Naive thymus-derived CD8-positive, alpha-beta T cell (primary cell): ENCODE measurements at regions of chr1 and their contacts with region 1.

Region 1: DNA sequence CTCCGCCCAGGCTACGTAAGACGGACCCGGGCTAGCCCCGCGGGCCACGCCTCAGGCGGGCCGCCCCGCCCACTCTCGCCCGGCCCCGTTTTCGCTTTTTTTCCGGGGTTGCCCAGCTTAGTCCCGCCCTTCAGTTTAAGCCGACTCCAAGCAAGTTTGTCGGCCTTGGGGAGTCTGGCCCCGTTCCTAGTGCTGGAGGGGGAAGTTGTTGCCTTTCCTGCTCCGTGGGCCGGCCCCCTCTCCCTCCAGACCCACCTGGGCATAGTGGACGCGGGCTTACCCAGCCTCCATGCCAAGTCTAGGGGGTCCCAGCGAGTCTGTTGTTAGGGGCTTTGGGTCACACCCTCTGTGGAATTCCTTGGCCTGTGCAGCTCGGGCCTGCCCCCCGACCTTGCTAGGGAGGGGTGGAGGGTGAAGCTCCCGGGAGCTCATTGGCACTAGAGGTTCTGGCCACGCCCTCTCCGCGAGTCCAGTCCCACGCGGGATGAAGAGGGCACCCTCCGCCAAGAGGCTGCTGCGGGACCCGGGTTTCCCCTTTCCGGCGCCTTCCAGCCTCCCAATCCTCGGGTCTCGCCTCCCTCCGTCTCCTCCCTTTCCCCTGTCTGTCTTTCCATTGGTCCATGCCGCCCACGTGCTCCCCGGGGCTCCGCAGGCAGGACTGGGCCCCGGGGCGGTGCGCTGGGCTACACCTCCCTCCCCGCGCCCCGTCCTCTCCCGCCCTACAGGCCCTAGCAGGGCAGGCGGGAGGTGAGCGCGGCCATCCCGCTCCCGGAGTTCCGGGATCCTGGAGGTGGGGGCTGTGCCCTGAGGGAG is 3.3 kb downstream of the RUSC1 start:
- DNase-seq: peak; percentile 72 to 91 (median 84)
- ATAC-seq: peak; percentile 81 to 83
- H3K4me3 Mint-ChIP-seq: peak overlapping the region; percentile 82 to 93 (median 90)
- H3K27ac Mint-ChIP-seq: peak overlapping the region; percentile 72 to 94 (median 82)
- H3K4me1 Mint-ChIP-seq: peaks cover 19 to 41% (median 35%) of the 10 kb centered on the region in 4 donors
- H3K27me3 Mint-ChIP-seq: no peaks in the 10 kb centered on the region

Region 2: GRCh38 chr1:155250633-155251449 is 73.2 kb before region 1 on chr1:
- POLR2A ChIA-PET with region 1: interaction called, 37 read pairs
- DNase-seq: peak; percentile 90 to 99 (median 96)
- ATAC-seq: peak; percentile 93 to 99
- H3K4me3 Mint-ChIP-seq: peak overlapping the region; percentile 60 to 82 (median 72)
- H3K27ac Mint-ChIP-seq: peak overlapping the region in 9 of 10 donors; percentile 31 to 84 (median 69)
- H3K4me1 Mint-ChIP-seq: peaks cover 14 to 33% (median 29%) of the 10 kb centered on the region in 4 donors
- H3K27me3 Mint-ChIP-seq: no peaks in the 10 kb centered on the region

Region 3: GRCh38 chr1:155261852-155262673 is 61.9 kb before region 1 on chr1 and contains the start of gene SCAMP3:
- POLR2A ChIA-PET with region 1: interaction called, 13 read pairs
- DNase-seq: peak; percentile 65 to 93 (median 82)
- ATAC-seq: peak; percentile 97 to 98
- H3K4me3 Mint-ChIP-seq: peak within 1 kb of the TSS; percentile 94 to 99 (median 98)
- H3K27ac Mint-ChIP-seq: peak within 1 kb of the TSS; percentile 94 to 99 (median 97)
- H3K4me1 Mint-ChIP-seq: peaks cover 21 to 41% (median 29%) of the 10 kb centered on the region in 4 donors
- H3K27me3 Mint-ChIP-seq: no peaks in the 10 kb centered on the region
- polyA plus RNA-seq, gene SCAMP3: 124 to 189 (median 138) TPM

Region 4: GRCh38 chr1:155277070-155277895 is 46.7 kb before region 1 on chr1 and contains the start of gene HCN3:
- POLR2A ChIA-PET with region 1: interaction called, 30 read pairs
- DNase-seq: peak; percentile 68 to 94 (median 82)
- ATAC-seq: peak; percentile 34 to 62
- H3K4me3 Mint-ChIP-seq: peak within 1 kb of the TSS; percentile 68 to 84 (median 78)
- H3K27ac Mint-ChIP-seq: peak within 1 kb of the TSS in 8 of 10 donors; percentile 23 to 88 (median 67)
- H3K4me1 Mint-ChIP-seq: peaks cover 16 to 42% (median 36%) of the 10 kb centered on the region in 4 donors
- H3K27me3 Mint-ChIP-seq: no peaks in the 10 kb centered on the region
- polyA plus RNA-seq, gene HCN3: 0.20 to 0.51 TPM in 2 of 3 donors, not detected in the other

Region 5: GRCh38 chr1:155308493-155309422 is 15.2 kb before region 1 on chr1 and contains the start of gene FDPS:
- POLR2A ChIA-PET with region 1: interaction called, 20 read pairs
- DNase-seq: peak; percentile 88 to 98 (median 96)
- ATAC-seq: peak; percentile 98
- H3K4me3 Mint-ChIP-seq: peak within 1 kb of the TSS; percentile 90 to 99 (median 96)
- H3K27ac Mint-ChIP-seq: peak within 1 kb of the TSS; percentile 91 to 98 (median 96)
- H3K4me1 Mint-ChIP-seq: peaks cover 12 to 36% (median 25%) of the 10 kb centered on the region in 4 donors
- H3K27me3 Mint-ChIP-seq: no peaks in the 10 kb centered on the region
- polyA plus RNA-seq, gene FDPS: 97.2 to 120 (median 105) TPM

Region 6: GRCh38 chr1:155352631-155353030 is 28.6 kb after region 1 on chr1:
- POLR2A ChIA-PET with region 1: no interaction called
- DNase-seq: no peak
- ATAC-seq: no peak
- H3K4me3 Mint-ChIP-seq: no peak overlapping the region
- H3K27ac Mint-ChIP-seq: peak overlapping the region in 3 of 10 donors; percentile 9 to 31 (median 27)
- H3K4me1 Mint-ChIP-seq: no peaks in the 10 kb centered on the region
- H3K27me3 Mint-ChIP-seq: no peaks in the 10 kb centered on the region

Region 7: GRCh38 chr1:155454096-155454495 is 130.1 kb after region 1 on chr1:
- POLR2A ChIA-PET with region 1: no interaction called
- DNase-seq: no peak
- ATAC-seq: no peak
- H3K4me3 Mint-ChIP-seq: no peak overlapping the region
- H3K27ac Mint-ChIP-seq: peak overlapping the region in 2 of 10 donors; percentile 10 to 13
- H3K4me1 Mint-ChIP-seq: peaks cover 3 to 15% (median 7%) of the 10 kb centered on the region in 4 donors
- H3K27me3 Mint-ChIP-seq: no peaks in the 10 kb centered on the region